A673 (cell line): ENCODE measurements at regions of chr2 and their contacts with region 1.

Region 1: DNA sequence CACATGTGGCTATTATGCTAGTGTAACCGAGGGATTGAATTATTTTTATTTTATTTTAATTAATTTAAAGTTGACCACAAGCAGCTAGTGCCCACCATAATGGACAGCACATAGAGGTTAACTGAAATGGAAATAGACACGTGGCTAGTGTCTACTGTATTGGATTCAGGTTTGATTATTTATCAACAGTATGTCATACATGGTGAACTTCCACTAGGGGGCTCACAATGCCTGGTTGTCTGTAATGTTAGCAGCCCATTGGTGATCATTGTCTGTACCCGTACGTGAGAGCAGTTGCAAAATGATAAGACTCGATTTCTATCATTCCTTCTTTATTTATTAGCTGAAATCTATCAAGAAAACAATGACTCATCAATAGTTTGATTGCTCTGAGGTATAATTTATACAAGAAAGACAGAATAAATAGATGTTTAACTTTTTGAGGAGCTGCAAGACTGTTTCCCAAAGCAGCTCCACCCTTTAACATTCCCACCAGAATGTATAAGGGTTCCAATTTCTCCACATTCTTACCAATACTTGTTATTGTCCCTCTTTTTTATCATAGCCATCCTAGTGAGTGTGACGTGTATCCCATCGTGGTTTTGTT is 76.5 kb downstream of the CYBRD1 start:
- DNase-seq: peak; percentile 80
- H3K4me3 ChIP-seq: no peak overlapping the region
- H3K27ac ChIP-seq: no peak overlapping the region
- H3K4me1 ChIP-seq: peaks cover 5% of the 10 kb centered on the region
- H3K27me3 ChIP-seq: no peaks in the 10 kb centered on the region
- CTCF ChIP-seq: peak; percentile 84

Region 2: GRCh38 chr2:172013396-172013795 is 414.6 kb after region 1 on chr2:
- CTCF ChIA-PET with region 1: no interaction called
- POLR2A ChIA-PET with region 1: no interaction called
- intact Hi-C with region 1: no loop called
- DNase-seq: no peak
- H3K4me3 ChIP-seq: no peak overlapping the region
- H3K27ac ChIP-seq: peak overlapping the region; percentile 63
- H3K4me1 ChIP-seq: peaks cover 21% of the 10 kb centered on the region
- H3K27me3 ChIP-seq: no peaks in the 10 kb centered on the region
- CTCF ChIP-seq: no peak

Region 3: DNA sequence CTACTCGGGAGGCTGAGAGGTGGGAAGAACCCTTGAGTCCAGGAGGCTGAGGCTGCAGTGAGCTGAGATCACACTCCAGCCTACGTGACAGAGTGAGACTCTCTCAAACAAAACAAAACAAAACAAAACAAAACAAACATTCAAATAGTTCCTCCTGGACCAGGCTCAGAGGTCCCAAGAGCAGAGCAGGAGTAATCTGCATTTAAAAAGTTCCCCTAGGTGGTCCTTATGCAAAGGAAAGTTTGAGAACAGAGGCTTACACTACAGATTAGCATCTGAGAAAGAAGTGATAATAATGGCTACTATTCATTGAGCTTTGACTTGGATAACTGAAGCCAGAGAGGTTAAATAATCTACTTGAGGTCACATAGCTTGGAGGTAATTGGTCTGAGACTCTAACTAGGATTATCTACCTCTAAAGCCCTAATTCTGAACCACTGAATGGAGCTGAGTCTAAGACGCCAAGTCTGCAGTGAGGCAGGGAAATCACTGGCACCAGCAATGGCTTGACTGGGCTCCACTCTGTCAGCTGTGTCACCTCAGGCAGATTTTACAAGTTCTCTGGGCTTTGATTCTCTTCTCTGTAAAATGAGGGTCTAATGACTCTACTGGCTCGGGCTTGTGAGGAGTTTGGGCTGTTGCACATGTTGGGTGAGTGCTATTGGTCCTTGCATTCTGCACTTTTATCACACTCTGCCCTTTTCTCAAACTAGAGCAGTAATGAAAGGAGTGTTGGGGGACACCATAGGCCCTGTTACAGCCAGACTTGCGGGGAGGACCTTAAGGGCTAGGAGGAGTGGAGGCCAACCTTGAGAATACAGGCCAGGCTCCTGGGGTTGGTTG is 533.1 kb after region 1 on chr2:
- CTCF ChIA-PET with region 1: interaction called, 3 read pairs
- POLR2A ChIA-PET with region 1: no interaction called
- intact Hi-C with region 1: loop called (anchors 5 kb)
- DNase-seq: no peak
- H3K4me3 ChIP-seq: no peak overlapping the region
- H3K27ac ChIP-seq: no peak overlapping the region
- H3K4me1 ChIP-seq: no peaks in the 10 kb centered on the region
- H3K27me3 ChIP-seq: no peaks in the 10 kb centered on the region
- CTCF ChIP-seq: no peak